B cell (primary cell): ENCODE measurements at regions of chr10 and their contacts with region 1.

Region 1: DNA sequence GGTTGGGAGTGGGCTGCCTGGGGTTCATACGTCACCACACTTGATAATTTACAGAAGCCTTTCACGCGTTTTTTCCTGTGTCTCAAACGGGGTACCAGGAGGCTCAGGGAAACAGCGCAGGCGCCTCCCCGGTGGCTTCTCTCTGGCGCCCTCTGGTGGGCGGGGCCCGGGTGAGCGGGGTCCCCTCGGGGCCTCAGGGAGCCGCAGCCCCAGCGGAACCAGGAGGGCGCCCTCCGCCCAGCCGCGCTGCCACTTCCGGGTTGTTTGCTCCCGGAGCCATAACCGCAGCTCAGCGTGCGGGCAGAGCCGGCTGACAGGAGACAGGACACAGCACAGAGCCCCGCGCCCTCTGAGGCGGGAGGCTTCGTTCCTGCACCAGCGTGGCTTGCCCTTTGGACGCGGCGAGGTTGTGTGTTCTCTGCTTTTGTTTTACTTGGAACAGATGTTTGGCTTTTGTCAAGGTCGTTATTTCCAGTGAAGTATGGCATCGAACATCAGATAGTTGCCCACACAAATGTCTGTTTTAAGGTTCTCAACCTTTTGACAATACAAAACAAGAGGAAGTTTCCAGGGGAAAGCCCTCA is 6.9 kb upstream of the CYP2E1 start:
- DNase-seq: peak; percentile 88
- ATAC-seq: peak; percentile 100
- H3K4me3 ChIP-seq: peak overlapping the region; percentile 9 to 65 (median 52)
- H3K4me3 Mint-ChIP-seq: peak overlapping the region; percentile 70
- H3K27ac ChIP-seq: no peak overlapping the region
- H3K27ac Mint-ChIP-seq: no peak overlapping the region
- H3K4me1 ChIP-seq: peaks cover 4 to 12% of the 10 kb centered on the region in 2 donors
- H3K4me1 Mint-ChIP-seq: peaks cover 13% of the 10 kb centered on the region
- H3K27me3 ChIP-seq: no peaks in the 10 kb centered on the region
- H3K27me3 Mint-ChIP-seq: peaks cover 16% of the 10 kb centered on the region
- CTCF ChIP-seq: peak; percentile 95

Region 2: GRCh38 chr10:133224756-133225372 is 295.4 kb before region 1 on chr10:
- CTCF ChIA-PET with region 1: no interaction called
- POLR2A ChIA-PET with region 1: no interaction called
- intact Hi-C with region 1: no loop called
- DNase-seq: no peak
- ATAC-seq: no peak
- H3K4me3 ChIP-seq: no peak overlapping the region
- H3K4me3 Mint-ChIP-seq: no peak overlapping the region
- H3K27ac ChIP-seq: no peak overlapping the region
- H3K27ac Mint-ChIP-seq: no peak overlapping the region
- H3K4me1 ChIP-seq: peaks cover 18 to 20% of the 10 kb centered on the region in 2 donors
- H3K4me1 Mint-ChIP-seq: peaks cover 15% of the 10 kb centered on the region
- H3K27me3 ChIP-seq: peaks cover 0 to 48% (median 21%) of the 10 kb centered on the region in 4 experiments
- H3K27me3 Mint-ChIP-seq: peaks cover 43% of the 10 kb centered on the region
- CTCF ChIP-seq: no peak

Region 3: GRCh38 chr10:133400624-133401424 is 119.4 kb before region 1 on chr10:
- CTCF ChIA-PET with region 1: no interaction called
- POLR2A ChIA-PET with region 1: no interaction called
- intact Hi-C with region 1: no loop called
- DNase-seq: peak; percentile 41
- ATAC-seq: peak; percentile 54
- H3K4me3 ChIP-seq: peak overlapping the region in 2 of 5 experiments; percentile 2 to 5
- H3K4me3 Mint-ChIP-seq: peak overlapping the region; percentile 53
- H3K27ac ChIP-seq: peak overlapping the region in 1 of 2 donors; percentile 42
- H3K27ac Mint-ChIP-seq: peak overlapping the region; percentile 54
- H3K4me1 ChIP-seq: peaks cover 19 to 20% of the 10 kb centered on the region in 2 donors
- H3K4me1 Mint-ChIP-seq: peaks cover 48% of the 10 kb centered on the region
- H3K27me3 ChIP-seq: no peaks in the 10 kb centered on the region
- H3K27me3 Mint-ChIP-seq: no peaks in the 10 kb centered on the region
- CTCF ChIP-seq: no peak

Region 4: GRCh38 chr10:133438711-133439273 is 81.5 kb before region 1 on chr10:
- CTCF ChIA-PET with region 1: no interaction called
- POLR2A ChIA-PET with region 1: no interaction called
- intact Hi-C with region 1: loop called (anchors 10 kb)
- DNase-seq: peak; percentile 9
- ATAC-seq: no peak
- H3K4me3 ChIP-seq: no peak overlapping the region
- H3K4me3 Mint-ChIP-seq: no peak overlapping the region
- H3K27ac ChIP-seq: no peak overlapping the region
- H3K27ac Mint-ChIP-seq: no peak overlapping the region
- H3K4me1 ChIP-seq: peaks cover 0 to 7% of the 10 kb centered on the region in 2 donors
- H3K4me1 Mint-ChIP-seq: peaks cover 5% of the 10 kb centered on the region
- H3K27me3 ChIP-seq: peaks cover 0 to 2% (median 0%) of the 10 kb centered on the region in 4 experiments
- H3K27me3 Mint-ChIP-seq: peaks cover 5% of the 10 kb centered on the region
- CTCF ChIP-seq: peak; percentile 29